ENCODE measurements at regions of chr6 and their contacts with region 1.

Region 1: DNA sequence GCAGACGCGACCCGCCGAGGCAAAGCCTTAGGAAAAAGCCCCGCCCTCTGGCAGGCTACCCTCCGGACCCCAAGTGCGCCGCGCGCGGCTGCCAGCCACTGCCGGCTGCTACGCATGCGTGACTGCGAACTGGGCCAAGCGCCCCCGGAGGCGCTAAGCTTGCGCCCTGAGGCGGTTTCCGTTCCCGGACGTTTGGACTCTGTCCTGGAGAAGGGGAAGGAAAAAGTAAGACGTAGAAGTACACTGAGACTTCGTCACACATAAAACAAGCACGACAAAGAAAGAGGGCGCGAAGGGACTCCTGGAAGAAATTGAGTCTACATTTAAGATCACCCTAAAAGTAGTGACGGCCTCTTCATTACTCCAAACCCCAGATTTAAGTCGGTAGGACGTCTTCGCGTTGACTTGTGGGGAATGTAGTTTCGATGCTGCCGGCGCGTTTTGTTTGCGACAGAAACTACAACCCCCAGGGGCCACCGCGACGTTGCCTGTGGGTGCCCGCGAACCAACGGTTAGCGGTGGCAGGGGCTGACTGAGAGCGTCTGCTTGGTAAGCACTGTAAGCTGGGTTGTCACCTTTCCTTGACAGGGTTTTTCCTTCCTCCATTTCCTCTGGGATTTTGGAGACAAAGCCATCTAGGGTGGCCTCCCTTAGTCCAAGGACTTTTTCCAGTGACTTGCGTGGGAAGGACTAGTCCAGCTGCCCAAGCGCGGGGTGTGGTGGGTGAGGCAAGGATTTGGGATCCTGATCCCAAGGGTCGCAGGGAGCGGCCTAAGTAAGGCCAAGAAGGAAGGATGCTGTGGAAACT is at the start of gene CEP57L1:
- DNase-seq: peak; percentile 89 to 98 (median 95)
- ATAC-seq: peak; percentile 78
- H3K4me3 ChIP-seq: peak within 1 kb of the TSS; percentile 74
- H3K4me3 Mint-ChIP-seq: peak within 1 kb of the TSS; percentile 96
- H3K27ac ChIP-seq: peak within 1 kb of the TSS; percentile 91 to 95
- H3K27ac Mint-ChIP-seq: peak within 1 kb of the TSS; percentile 99
- H3K4me1 ChIP-seq: peaks cover 31% of the 10 kb centered on the region
- H3K4me1 Mint-ChIP-seq: peaks cover 49% of the 10 kb centered on the region
- H3K27me3 ChIP-seq: no peaks in the 10 kb centered on the region
- H3K27me3 Mint-ChIP-seq: no peaks in the 10 kb centered on the region
- CTCF ChIP-seq: no peak
- total RNA-seq, gene CEP57L1: 2.9 to 3.7 TPM

Region 2: GRCh38 chr6:107716688-107717089 is 1378.5 kb before region 1 on chr6:
- CTCF ChIA-PET with region 1: no interaction called
- POLR2A ChIA-PET with region 1: no interaction called
- intact Hi-C with region 1: loop called in 1 of 2 experiments (anchors 10 kb)
- DNase-seq: peak; percentile 46 to 95 (median 76)
- ATAC-seq: peak; percentile 85
- H3K4me3 ChIP-seq: no peak overlapping the region
- H3K4me3 Mint-ChIP-seq: peak overlapping the region; percentile 68
- H3K27ac ChIP-seq: peak overlapping the region in 1 of 2 experiments; percentile 79
- H3K27ac Mint-ChIP-seq: peak overlapping the region; percentile 91
- H3K4me1 ChIP-seq: peaks cover 54% of the 10 kb centered on the region
- H3K4me1 Mint-ChIP-seq: peaks cover 77% of the 10 kb centered on the region
- H3K27me3 ChIP-seq: no peaks in the 10 kb centered on the region
- H3K27me3 Mint-ChIP-seq: no peaks in the 10 kb centered on the region
- CTCF ChIP-seq: no peak

Region 3: GRCh38 chr6:108260809-108261569 is 834.2 kb before region 1 on chr6 and contains the start of gene SNX3:
- CTCF ChIA-PET with region 1: no interaction called
- POLR2A ChIA-PET with region 1: interaction called, 10 read pairs
- intact Hi-C with region 1: loop called in 1 of 2 experiments (anchors 2 kb)
- DNase-seq: peak; percentile 76 to 95 (median 85)
- ATAC-seq: peak; percentile 79
- H3K4me3 ChIP-seq: peak within 1 kb of the TSS; percentile 64 to 76
- H3K4me3 Mint-ChIP-seq: peak within 1 kb of the TSS; percentile 89
- H3K27ac ChIP-seq: peak within 1 kb of the TSS; percentile 82 to 95
- H3K27ac Mint-ChIP-seq: peak within 1 kb of the TSS; percentile 97
- H3K4me1 ChIP-seq: peaks cover 17% of the 10 kb centered on the region
- H3K4me1 Mint-ChIP-seq: peaks cover 36% of the 10 kb centered on the region
- H3K27me3 ChIP-seq: no peaks in the 10 kb centered on the region
- H3K27me3 Mint-ChIP-seq: no peaks in the 10 kb centered on the region
- CTCF ChIP-seq: no peak
- total RNA-seq, gene SNX3: 37.0 to 40.7 TPM

Region 4: GRCh38 chr6:108558372-108559096 is 536.7 kb before region 1 on chr6:
- CTCF ChIA-PET with region 1: no interaction called
- POLR2A ChIA-PET with region 1: interaction called, 38 read pairs
- intact Hi-C with region 1: loop called (anchors 1 kb)
- DNase-seq: peak; percentile 92 to 100 (median 96)
- ATAC-seq: peak; percentile 68
- H3K4me3 ChIP-seq: peak overlapping the region; percentile 92 to 97
- H3K4me3 Mint-ChIP-seq: peak overlapping the region; percentile 97
- H3K27ac ChIP-seq: peak overlapping the region; percentile 87 to 99
- H3K27ac Mint-ChIP-seq: peak overlapping the region; percentile 99
- H3K4me1 ChIP-seq: peaks cover 16% of the 10 kb centered on the region
- H3K4me1 Mint-ChIP-seq: peaks cover 24% of the 10 kb centered on the region
- H3K27me3 ChIP-seq: no peaks in the 10 kb centered on the region
- H3K27me3 Mint-ChIP-seq: peaks cover 2% of the 10 kb centered on the region
- CTCF ChIP-seq: no peak

Region 5: DNA sequence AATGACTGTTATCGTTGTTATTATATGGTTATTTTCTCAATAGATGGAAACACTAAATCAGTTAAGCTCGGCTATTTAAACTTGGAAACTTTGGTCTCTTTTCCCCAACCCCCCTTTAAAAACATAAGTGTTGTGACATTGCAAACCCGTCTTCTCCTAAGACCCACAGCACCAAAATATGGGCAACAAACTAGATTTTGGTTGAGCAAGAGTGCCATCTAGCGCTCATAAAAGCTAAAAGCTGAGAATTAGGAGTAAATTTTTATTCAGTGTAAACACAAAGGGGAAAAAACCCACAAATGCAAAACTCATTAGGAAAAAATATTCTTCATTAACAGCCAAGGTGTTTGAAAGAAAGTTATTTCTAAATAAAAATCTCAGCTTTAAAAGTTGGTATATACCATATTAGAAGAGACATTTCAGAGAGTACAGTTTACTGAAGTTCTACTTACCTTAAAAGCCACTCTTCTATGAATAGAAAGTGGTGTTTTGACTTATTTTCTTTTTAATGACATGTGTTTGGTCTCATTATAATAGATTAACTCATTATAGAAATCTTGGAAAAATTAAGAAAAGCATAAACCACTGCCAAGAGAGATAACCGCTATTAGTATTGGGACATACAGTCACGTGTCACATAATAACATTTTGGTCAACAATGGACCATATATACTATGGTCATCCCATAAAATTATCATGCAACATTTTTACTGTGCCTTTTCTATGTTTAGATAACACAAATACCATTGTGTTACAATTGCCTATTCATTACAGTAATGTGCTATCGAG is 21.7 kb before region 1 on chr6:
- CTCF ChIA-PET with region 1: interaction called, 6 read pairs
- POLR2A ChIA-PET with region 1: interaction called, 5 read pairs
- intact Hi-C with region 1: loop called in 1 of 2 experiments (anchors 2 kb)
- DNase-seq: peak in 8 of 9 experiments; percentile 8 to 87 (median 50)
- ATAC-seq: peak; percentile 69
- H3K4me3 ChIP-seq: no peak overlapping the region
- H3K4me3 Mint-ChIP-seq: no peak overlapping the region
- H3K27ac ChIP-seq: no peak overlapping the region
- H3K27ac Mint-ChIP-seq: no peak overlapping the region
- H3K4me1 ChIP-seq: peaks cover 23% of the 10 kb centered on the region
- H3K4me1 Mint-ChIP-seq: peaks cover 33% of the 10 kb centered on the region
- H3K27me3 ChIP-seq: no peaks in the 10 kb centered on the region
- H3K27me3 Mint-ChIP-seq: no peaks in the 10 kb centered on the region
- CTCF ChIP-seq: peak; percentile 91

Region 6: GRCh38 chr6:109105657-109106056 is 10.4 kb after region 1 on chr6:
- CTCF ChIA-PET with region 1: no interaction called
- POLR2A ChIA-PET with region 1: no interaction called
- intact Hi-C with region 1: no loop called
- DNase-seq: no peak
- ATAC-seq: no peak
- H3K4me3 ChIP-seq: no peak overlapping the region
- H3K4me3 Mint-ChIP-seq: no peak overlapping the region
- H3K27ac ChIP-seq: no peak overlapping the region
- H3K27ac Mint-ChIP-seq: no peak overlapping the region
- H3K4me1 ChIP-seq: no peaks in the 10 kb centered on the region
- H3K4me1 Mint-ChIP-seq: no peaks in the 10 kb centered on the region
- H3K27me3 ChIP-seq: no peaks in the 10 kb centered on the region
- H3K27me3 Mint-ChIP-seq: no peaks in the 10 kb centered on the region
- CTCF ChIP-seq: no peak

Region 7: DNA sequence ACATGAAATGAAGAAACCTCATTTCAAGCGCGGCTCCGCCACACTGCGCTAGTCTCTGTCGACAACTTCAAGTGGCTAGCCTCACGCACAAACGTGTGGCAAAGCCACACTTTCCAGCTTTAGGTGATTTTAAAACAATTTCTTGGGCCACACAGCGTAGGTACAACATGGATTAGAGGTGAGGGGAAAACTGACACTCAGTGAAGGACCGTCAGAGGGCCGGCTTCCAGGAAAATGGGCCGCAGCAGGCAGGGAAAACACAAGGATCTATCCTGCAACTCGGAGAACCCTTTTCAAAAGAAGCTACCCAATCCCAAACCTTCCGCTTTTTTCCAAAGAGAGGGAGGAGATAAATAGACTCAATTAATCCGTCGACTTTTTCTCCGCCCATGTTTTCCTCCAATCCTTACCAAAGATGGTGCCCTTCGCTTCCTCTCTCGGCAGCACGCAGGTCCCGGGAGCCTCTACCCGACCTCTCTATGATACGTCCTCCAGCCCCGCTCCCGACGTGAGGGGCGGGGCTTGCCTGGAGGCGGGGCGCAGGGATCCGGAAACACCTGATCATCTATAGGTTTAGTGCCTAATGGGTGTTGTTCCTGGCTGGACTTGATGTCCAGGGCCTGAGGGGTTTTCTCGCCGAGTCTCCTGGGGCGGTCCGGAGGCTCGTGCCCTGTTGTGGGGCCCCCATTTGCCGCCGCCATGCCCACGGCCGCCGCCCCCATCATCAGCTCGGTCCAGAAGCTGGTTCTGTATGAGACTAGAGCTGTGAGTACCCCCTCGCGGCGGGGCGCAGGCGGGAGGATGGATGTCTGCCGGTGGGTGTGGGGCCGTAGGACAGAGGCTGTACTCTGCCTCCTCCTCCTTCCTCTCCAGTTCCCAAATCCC is 595.7 kb after region 1 on chr6 and contains the starts of genes AK9 and FIG4:
- CTCF ChIA-PET with region 1: no interaction called
- POLR2A ChIA-PET with region 1: interaction called, 3 read pairs
- intact Hi-C with region 1: loop called (anchors 1 to 5 kb)
- DNase-seq: peak; percentile 68 to 93 (median 90)
- ATAC-seq: peak; percentile 96
- H3K4me3 ChIP-seq: peak within 1 kb of the TSS; percentile 85 to 91
- H3K4me3 Mint-ChIP-seq: peak within 1 kb of the TSS; percentile 93
- H3K27ac ChIP-seq: peak within 1 kb of the TSS; percentile 81 to 91
- H3K27ac Mint-ChIP-seq: peak within 1 kb of the TSS; percentile 98
- H3K4me1 ChIP-seq: peaks cover 22% of the 10 kb centered on the region
- H3K4me1 Mint-ChIP-seq: peaks cover 27% of the 10 kb centered on the region
- H3K27me3 ChIP-seq: no peaks in the 10 kb centered on the region
- H3K27me3 Mint-ChIP-seq: no peaks in the 10 kb centered on the region
- CTCF ChIP-seq: no peak
- total RNA-seq, gene AK9: 5.1 to 6.5 TPM
- total RNA-seq, gene FIG4: 2.3 TPM

Region 8: GRCh38 chr6:110873981-110874879 is 1779.0 kb after region 1 on chr6 and contains the start of gene AMD1:
- CTCF ChIA-PET with region 1: no interaction called
- POLR2A ChIA-PET with region 1: interaction called, 4 read pairs
- intact Hi-C with region 1: loop called in 1 of 2 experiments (anchors 5 kb)
- DNase-seq: peak; percentile 89 to 98 (median 96)
- ATAC-seq: peak; percentile 71
- H3K4me3 ChIP-seq: peak within 1 kb of the TSS; percentile 83 to 90
- H3K4me3 Mint-ChIP-seq: peak within 1 kb of the TSS; percentile 99
- H3K27ac ChIP-seq: peak within 1 kb of the TSS; percentile 92 to 95
- H3K27ac Mint-ChIP-seq: peak within 1 kb of the TSS; percentile 99
- H3K4me1 ChIP-seq: peaks cover 25% of the 10 kb centered on the region
- H3K4me1 Mint-ChIP-seq: peaks cover 33% of the 10 kb centered on the region
- H3K27me3 ChIP-seq: no peaks in the 10 kb centered on the region
- H3K27me3 Mint-ChIP-seq: no peaks in the 10 kb centered on the region
- CTCF ChIP-seq: no peak
- total RNA-seq, gene AMD1: 161 to 167 TPM